ENCODE measurements at regions of chr11 and their contacts with region 1.

Region 1: DNA sequence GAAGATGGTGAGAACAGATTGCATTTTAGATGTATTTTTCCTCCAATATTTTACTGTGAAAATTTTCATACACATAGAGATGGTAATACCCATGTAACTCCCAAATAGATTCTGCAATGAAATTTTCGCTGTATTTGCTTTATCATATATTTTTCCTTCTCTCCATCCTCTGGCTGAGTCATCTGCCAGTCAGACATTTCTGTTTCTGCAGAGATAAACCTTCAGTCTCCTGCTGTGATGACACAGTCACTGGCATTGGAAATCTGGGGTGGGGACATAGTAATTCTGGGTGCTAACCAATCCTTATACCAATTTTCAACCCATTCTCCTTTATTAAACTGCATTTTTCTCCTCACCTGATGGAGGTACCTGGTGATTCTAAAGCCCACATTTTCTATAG is 33.7 kb downstream of the SVIP start:
- DNase-seq: no peak
- H3K4me3 ChIP-seq: no peak overlapping the region
- H3K27ac ChIP-seq: no peak overlapping the region
- H3K4me1 ChIP-seq: peaks cover 11% of the 10 kb centered on the region
- H3K27me3 ChIP-seq: no peaks in the 10 kb centered on the region
- CTCF ChIP-seq: no peak

Region 2: GRCh38 chr11:22822203-22822602 is 26.3 kb after region 1 on chr11:
- CTCF ChIA-PET with region 1: no interaction called
- dilution Hi-C with region 1: no loop called
- in situ Hi-C with region 1: no loop called
- intact Hi-C with region 1: loop called (anchors 2 kb)
- DNase-seq: no peak
- H3K4me3 ChIP-seq: no peak overlapping the region
- H3K27ac ChIP-seq: no peak overlapping the region
- H3K4me1 ChIP-seq: no peaks in the 10 kb centered on the region
- H3K27me3 ChIP-seq: no peaks in the 10 kb centered on the region
- CTCF ChIP-seq: no peak

Measured in mammary epithelial cell (primary cell).